Activated CD4-positive, alpha-beta memory T cell treated with anti-CD3 and anti-CD28 coated beads for 36 hours (primary cell): ENCODE measurements at regions of chr1 and their contacts with region 1.

Region 1: GRCh38 chr1:117121776-117122697 is 488 bp upstream of the TRIM45 start:
- DNase-seq: peak; percentile 91
- H3K4me3 Mint-ChIP-seq: peak overlapping the region; percentile 72
- H3K27ac Mint-ChIP-seq: no peak overlapping the region
- H3K4me1 Mint-ChIP-seq: peaks cover 8% of the 10 kb centered on the region
- H3K27me3 Mint-ChIP-seq: peaks cover 8% of the 10 kb centered on the region

Region 2: DNA sequence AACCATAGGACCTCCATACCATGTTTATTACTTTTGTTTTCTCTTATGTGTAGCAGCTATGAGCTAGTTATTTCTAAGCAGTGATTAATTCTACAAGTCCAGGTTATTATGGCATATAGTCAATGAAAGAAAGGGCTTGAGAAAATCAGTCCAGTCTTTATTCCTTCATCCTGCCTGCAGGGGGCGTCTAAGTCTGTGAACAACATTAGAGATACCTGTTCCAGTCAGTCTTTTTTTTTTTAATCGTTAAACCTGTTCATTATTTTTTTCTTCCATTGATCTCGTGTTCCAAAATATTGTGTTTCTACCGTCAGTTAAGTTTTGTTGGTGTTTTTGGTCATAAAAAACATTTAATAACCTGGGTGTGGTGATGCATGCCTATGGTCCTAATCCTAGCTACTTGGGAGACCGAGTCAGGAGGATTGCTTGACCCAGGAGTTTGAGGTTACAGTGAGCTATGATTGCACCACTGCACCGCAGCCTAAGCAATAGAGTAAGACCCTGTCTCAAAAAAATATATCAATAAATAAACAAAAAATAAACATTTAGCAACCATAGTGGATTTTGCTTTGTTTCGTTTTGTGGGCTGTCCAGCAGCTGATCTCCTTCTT is 397.2 kb before region 1 on chr1:
- CTCF ChIA-PET with region 1: no interaction called
- POLR2A ChIA-PET with region 1: no interaction called
- intact Hi-C with region 1: loop called (anchors 10 kb)
- DNase-seq: peak; percentile 84
- H3K4me3 Mint-ChIP-seq: no peak overlapping the region
- H3K27ac Mint-ChIP-seq: peak overlapping the region; percentile 64
- H3K4me1 Mint-ChIP-seq: peaks cover 28% of the 10 kb centered on the region
- H3K27me3 Mint-ChIP-seq: no peaks in the 10 kb centered on the region

Region 3: GRCh38 chr1:116806245-116806644 is 315.8 kb before region 1 on chr1:
- CTCF ChIA-PET with region 1: no interaction called
- POLR2A ChIA-PET with region 1: no interaction called
- intact Hi-C with region 1: no loop called
- DNase-seq: peak; percentile 91
- H3K4me3 Mint-ChIP-seq: peak overlapping the region; percentile 79
- H3K27ac Mint-ChIP-seq: peak overlapping the region; percentile 99
- H3K4me1 Mint-ChIP-seq: peaks cover 78% of the 10 kb centered on the region
- H3K27me3 Mint-ChIP-seq: no peaks in the 10 kb centered on the region

Region 4: DNA sequence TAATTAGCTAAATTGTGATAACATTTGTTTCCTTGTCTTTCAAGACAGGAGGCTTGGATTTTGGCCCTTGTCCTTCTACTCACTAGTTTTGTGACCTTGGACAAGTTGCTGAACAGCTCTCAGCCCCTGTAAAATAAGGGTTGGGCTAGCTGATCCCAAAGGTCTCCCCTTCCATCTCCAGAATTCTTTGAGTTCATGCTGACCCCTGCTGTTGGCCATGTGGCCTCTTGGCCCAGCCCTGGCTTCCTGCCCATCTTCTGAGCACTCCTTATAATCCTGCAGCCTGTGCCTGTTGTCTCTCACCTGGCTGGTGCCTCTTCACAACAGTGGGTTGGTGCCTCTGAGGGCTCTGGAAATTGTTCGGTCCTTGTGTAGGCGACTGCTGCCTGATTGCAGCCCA is 202.2 kb before region 1 on chr1:
- CTCF ChIA-PET with region 1: no interaction called
- POLR2A ChIA-PET with region 1: no interaction called
- intact Hi-C with region 1: no loop called
- DNase-seq: no peak
- H3K4me3 Mint-ChIP-seq: no peak overlapping the region
- H3K27ac Mint-ChIP-seq: no peak overlapping the region
- H3K4me1 Mint-ChIP-seq: peaks cover 7% of the 10 kb centered on the region
- H3K27me3 Mint-ChIP-seq: peaks cover 3% of the 10 kb centered on the region

Region 5: GRCh38 chr1:117067533-117068370 is 54.3 kb before region 1 on chr1:
- CTCF ChIA-PET with region 1: interaction called, 150 read pairs
- POLR2A ChIA-PET with region 1: no interaction called
- intact Hi-C with region 1: loop called (anchors 2 kb)
- DNase-seq: peak; percentile 60
- H3K4me3 Mint-ChIP-seq: no peak overlapping the region
- H3K27ac Mint-ChIP-seq: no peak overlapping the region
- H3K4me1 Mint-ChIP-seq: peaks cover 38% of the 10 kb centered on the region
- H3K27me3 Mint-ChIP-seq: no peaks in the 10 kb centered on the region

Region 6: GRCh38 chr1:117077267-117077666 is 44.8 kb before region 1 on chr1:
- CTCF ChIA-PET with region 1: interaction called, 5 read pairs
- POLR2A ChIA-PET with region 1: no interaction called
- intact Hi-C with region 1: loop called (anchors 2 kb)
- DNase-seq: peak; percentile 79
- H3K4me3 Mint-ChIP-seq: no peak overlapping the region
- H3K27ac Mint-ChIP-seq: peak overlapping the region; percentile 71
- H3K4me1 Mint-ChIP-seq: peaks cover 30% of the 10 kb centered on the region
- H3K27me3 Mint-ChIP-seq: no peaks in the 10 kb centered on the region

Region 7: DNA sequence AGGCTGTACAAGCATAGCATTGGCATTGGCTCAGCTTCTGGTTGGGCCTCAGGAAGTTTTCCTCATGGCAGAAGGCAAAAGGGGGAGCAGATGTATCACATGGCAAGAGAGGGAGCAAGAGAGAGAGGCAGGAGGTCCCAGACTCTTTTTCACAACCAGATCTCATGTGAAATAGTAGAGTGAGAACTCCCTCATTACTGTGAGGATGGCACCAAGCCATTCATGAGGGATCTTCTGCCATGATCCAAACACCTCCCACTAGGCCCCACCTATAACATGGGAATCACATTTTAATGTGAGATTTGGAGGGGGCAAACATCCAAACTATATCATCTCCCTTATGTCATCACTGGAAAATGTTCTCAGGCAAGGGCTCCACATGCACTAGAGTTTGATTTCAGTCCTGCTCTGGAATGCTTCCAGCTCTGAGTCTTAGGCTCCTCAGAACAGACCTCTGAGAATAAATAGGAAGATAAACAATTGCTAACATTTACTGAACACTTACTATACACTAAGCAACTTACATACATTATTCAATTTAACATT is 128.1 kb after region 1 on chr1:
- CTCF ChIA-PET with region 1: no interaction called
- POLR2A ChIA-PET with region 1: no interaction called
- intact Hi-C with region 1: no loop called
- DNase-seq: no peak
- H3K4me3 Mint-ChIP-seq: no peak overlapping the region
- H3K27ac Mint-ChIP-seq: no peak overlapping the region
- H3K4me1 Mint-ChIP-seq: no peaks in the 10 kb centered on the region
- H3K27me3 Mint-ChIP-seq: peaks cover 4% of the 10 kb centered on the region

Region 8: GRCh38 chr1:117268535-117269455 is 146.8 kb after region 1 on chr1:
- CTCF ChIA-PET with region 1: no interaction called
- POLR2A ChIA-PET with region 1: no interaction called
- intact Hi-C with region 1: no loop called
- DNase-seq: no peak
- H3K4me3 Mint-ChIP-seq: no peak overlapping the region
- H3K27ac Mint-ChIP-seq: no peak overlapping the region
- H3K4me1 Mint-ChIP-seq: no peaks in the 10 kb centered on the region
- H3K27me3 Mint-ChIP-seq: peaks cover 2% of the 10 kb centered on the region